ENCODE measurements at regions of chr12 and their contacts with region 1.

Region 1: DNA sequence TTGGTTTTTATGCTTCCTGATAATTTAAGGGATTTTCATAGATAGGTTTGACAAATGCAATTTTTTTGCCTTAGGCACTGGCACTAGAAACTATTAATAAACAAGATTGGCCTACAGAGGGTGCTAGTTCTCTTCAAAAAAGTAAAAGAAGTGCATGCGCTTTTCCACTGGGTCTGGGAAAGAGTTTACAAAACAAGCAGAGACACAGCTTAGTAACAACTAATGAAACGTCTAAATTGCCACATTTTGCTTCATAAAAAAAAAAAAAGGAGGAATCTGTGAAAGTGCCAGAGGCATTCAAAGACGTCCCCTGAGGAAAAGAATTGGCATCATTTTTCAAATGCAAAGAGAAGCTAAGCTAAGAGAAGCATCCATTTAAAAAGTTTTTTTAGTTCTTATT is 58.3 kb upstream of the EEA1 start:
- DNase-seq: no peak
- H3K4me3 Mint-ChIP-seq: peak overlapping the region; percentile 26
- H3K27ac Mint-ChIP-seq: peak overlapping the region; percentile 78
- H3K4me1 Mint-ChIP-seq: peaks cover 26% of the 10 kb centered on the region
- H3K27me3 Mint-ChIP-seq: no peaks in the 10 kb centered on the region

Region 2: GRCh38 chr12:92827836-92828431 is 159.4 kb before region 1 on chr12:
- CTCF ChIA-PET with region 1: interaction called, 3 read pairs
- intact Hi-C with region 1: loop called (anchors 2 kb)
- DNase-seq: peak; percentile 56
- H3K4me3 Mint-ChIP-seq: no peak overlapping the region
- H3K27ac Mint-ChIP-seq: no peak overlapping the region
- H3K4me1 Mint-ChIP-seq: peaks cover 2% of the 10 kb centered on the region
- H3K27me3 Mint-ChIP-seq: no peaks in the 10 kb centered on the region

Region 3: GRCh38 chr12:93089805-93090569 is 102.6 kb after region 1 on chr12:
- CTCF ChIA-PET with region 1: no interaction called
- intact Hi-C with region 1: loop called (anchors 1 kb)
- DNase-seq: peak; percentile 64
- H3K4me3 Mint-ChIP-seq: no peak overlapping the region
- H3K27ac Mint-ChIP-seq: peak overlapping the region; percentile 68
- H3K4me1 Mint-ChIP-seq: peaks cover 13% of the 10 kb centered on the region
- H3K27me3 Mint-ChIP-seq: no peaks in the 10 kb centered on the region

Region 4: DNA sequence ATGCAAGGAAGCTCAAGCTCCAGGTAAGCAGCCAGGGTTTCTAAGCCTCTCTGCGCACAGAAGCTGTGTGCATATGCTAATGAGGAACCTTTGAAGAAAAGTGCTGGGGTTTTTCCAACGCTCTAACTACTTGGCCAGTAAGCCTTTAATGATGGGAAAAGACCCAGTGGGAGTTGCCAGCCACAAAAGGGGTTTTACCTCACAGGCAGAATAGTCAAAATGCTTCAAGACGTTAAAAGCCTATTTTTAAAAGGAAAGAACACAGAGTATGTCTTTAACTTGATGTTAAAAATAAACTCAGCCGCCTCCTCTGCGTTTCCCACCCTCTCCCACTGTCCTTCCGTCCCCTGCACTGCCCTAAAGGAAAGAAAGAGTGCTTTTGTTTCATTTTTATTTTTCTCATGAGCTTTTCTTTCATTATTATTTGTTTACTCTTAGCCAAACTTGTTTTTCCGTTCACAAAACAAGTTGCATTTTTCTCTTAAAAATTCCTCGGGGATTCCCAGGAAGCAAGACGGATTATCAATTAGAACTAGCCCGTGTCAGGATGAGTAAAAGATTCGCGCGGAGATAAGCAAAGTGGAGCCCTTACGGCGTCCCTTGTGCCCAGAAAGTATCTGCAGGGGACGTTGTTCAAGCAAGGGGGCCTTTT is 180.6 kb after region 1 on chr12:
- CTCF ChIA-PET with region 1: interaction called, 3 read pairs
- intact Hi-C with region 1: loop called (anchors 5 kb)
- DNase-seq: peak; percentile 85
- H3K4me3 Mint-ChIP-seq: peak overlapping the region; percentile 49
- H3K27ac Mint-ChIP-seq: peak overlapping the region; percentile 67
- H3K4me1 Mint-ChIP-seq: peaks cover 17% of the 10 kb centered on the region
- H3K27me3 Mint-ChIP-seq: peaks cover 7% of the 10 kb centered on the region

Region 5: GRCh38 chr12:93397412-93397811 is 410.1 kb after region 1 on chr12:
- CTCF ChIA-PET with region 1: interaction called, 29 read pairs
- intact Hi-C with region 1: loop called (anchors 1 kb)
- DNase-seq: no peak
- H3K4me3 Mint-ChIP-seq: no peak overlapping the region
- H3K27ac Mint-ChIP-seq: no peak overlapping the region
- H3K4me1 Mint-ChIP-seq: peaks cover 3% of the 10 kb centered on the region
- H3K27me3 Mint-ChIP-seq: no peaks in the 10 kb centered on the region

Region 6: GRCh38 chr12:93569656-93570551 is 582.5 kb after region 1 on chr12:
- CTCF ChIA-PET with region 1: no interaction called
- intact Hi-C with region 1: loop called (anchors 2 kb)
- DNase-seq: peak; percentile 88
- H3K4me3 Mint-ChIP-seq: peak overlapping the region; percentile 83
- H3K27ac Mint-ChIP-seq: peak overlapping the region; percentile 81
- H3K4me1 Mint-ChIP-seq: peaks cover 15% of the 10 kb centered on the region
- H3K27me3 Mint-ChIP-seq: peaks cover 17% of the 10 kb centered on the region